PC-3 (cell line): ENCODE measurements at regions of chr7 and their contacts with region 1.

Region 1: DNA sequence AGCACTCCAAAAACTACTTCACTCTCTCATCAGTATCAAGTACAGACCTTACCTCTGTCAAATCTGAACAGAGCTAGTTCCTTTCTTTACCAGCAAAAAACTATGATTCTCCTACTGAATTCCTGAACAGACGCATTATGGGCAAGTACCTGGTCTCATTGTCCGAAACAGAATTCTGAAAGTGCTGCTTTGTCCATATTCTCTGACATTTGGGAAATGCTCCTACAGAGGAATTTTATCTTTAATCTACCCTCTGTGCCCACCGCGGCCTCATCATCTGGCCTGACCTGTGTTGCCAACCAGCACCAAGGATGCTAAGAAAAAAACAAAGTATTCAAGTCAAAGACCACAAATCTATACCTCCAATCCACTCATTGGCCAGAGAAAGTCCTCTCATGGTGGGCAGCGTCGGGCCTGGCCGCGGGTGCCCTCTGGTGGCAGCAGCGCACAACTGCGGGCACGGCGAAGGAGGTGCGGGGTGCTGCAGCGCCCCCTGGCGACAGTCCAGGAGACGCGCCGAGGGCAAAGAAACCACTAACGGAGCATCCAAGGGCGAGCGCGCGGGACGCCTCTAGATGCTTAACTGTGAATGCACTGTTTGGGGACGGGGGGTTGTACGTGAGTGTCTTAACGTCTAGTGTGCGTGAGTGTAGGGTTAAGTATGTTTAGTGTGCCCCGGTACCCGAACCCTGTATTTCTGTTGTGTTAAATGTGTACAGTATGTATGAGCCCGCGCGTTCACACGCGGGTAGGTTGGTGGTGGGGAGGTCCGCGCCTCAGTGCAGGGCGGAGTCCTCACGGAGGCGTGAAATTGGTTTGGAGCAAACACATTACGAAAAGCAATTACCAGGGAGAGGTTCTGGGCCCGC is 5.0 kb upstream of the GBX1 start:
- DNase-seq: peak; percentile 66
- ATAC-seq: peak; percentile 66
- H3K4me3 ChIP-seq: peak overlapping the region; percentile 28; the same call in 1 of the 2 replicates
- H3K27ac ChIP-seq: no peak overlapping the region
- H3K4me1 ChIP-seq: peaks cover 6% of the 10 kb centered on the region; the same call in 1 of the 2 replicates
- H3K27me3 ChIP-seq: peaks cover 23% of the 10 kb centered on the region
- CTCF ChIP-seq: peak; percentile 100

Region 2: DNA sequence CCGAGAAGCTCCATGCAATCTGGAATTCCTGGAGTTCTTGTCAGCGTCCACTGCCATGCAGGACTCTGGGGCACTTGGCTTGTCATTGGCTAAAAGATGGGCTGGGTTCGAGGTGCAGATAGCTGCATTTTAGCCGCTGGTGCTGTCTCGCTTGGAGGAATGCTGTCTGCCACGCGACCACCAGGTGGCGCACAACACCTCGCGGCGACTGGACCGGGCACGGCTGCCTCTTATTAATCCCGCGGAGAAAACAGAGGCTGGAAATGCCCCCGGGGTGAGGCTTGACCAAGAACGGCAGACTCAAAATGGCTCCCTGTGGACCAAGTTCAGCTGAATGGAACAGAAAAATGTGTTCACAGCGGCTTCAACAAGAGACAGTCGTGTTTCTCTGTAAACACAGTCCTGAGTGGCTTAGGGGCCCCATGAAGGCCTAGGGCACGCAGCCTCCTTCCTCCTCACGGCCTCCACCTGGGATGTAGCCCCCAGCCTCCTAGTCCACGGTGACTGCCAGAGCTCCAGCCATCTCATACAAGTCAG is 274.0 kb before region 1 on chr7:
- CTCF ChIA-PET with region 1: no interaction called
- POLR2A ChIA-PET with region 1: no interaction called
- intact Hi-C with region 1: loop called (anchors 5 kb)
- DNase-seq: peak; percentile 72
- ATAC-seq: peak; percentile 83
- H3K4me3 ChIP-seq: no peak overlapping the region
- H3K27ac ChIP-seq: no peak overlapping the region
- H3K4me1 ChIP-seq: peaks cover 16% of the 10 kb centered on the region
- H3K27me3 ChIP-seq: no peaks in the 10 kb centered on the region
- CTCF ChIP-seq: peak; percentile 91

Region 3: DNA sequence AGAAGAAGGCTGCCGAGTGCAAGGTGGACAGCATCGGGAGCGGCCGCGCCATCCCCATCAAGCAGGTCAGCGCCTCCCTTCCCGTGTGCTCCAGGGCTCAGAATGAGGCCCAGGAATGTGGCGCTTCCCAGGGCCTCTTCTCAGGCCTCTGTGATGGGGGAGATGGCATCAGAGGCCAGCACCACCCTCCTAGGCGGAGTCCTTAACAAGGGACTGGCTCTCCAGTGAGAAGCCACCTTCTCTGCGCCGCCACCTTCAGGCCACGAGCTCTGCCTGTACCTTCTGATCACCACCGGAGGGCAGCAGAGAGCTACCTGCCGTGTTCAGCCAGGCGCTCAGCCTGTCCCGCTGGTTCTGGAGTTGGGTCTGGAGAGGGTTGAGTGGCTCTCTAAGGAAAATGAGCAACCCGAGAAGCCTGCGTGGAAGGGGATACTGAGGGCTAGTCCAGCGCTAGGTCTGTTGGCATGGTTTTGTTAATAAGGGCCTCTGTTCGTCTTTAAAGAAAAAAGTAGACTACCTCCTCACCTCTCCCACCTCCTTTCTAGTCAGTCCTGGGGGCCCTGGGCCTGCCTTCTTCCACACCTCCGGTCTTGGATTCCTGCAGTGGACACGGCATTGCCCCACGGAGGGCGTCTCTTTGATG is 48.6 kb before region 1 on chr7:
- CTCF ChIA-PET with region 1: interaction called, 10 read pairs
- POLR2A ChIA-PET with region 1: no interaction called
- intact Hi-C with region 1: loop called (anchors 1 kb)
- DNase-seq: peak; percentile 86
- ATAC-seq: peak; percentile 94
- H3K4me3 ChIP-seq: no peak overlapping the region
- H3K27ac ChIP-seq: no peak overlapping the region
- H3K4me1 ChIP-seq: no peaks in the 10 kb centered on the region
- H3K27me3 ChIP-seq: no peaks in the 10 kb centered on the region
- CTCF ChIP-seq: peak; percentile 98

Region 4: GRCh38 chr7:151304856-151305255 is 132.3 kb after region 1 on chr7:
- CTCF ChIA-PET with region 1: no interaction called
- POLR2A ChIA-PET with region 1: no interaction called
- intact Hi-C with region 1: loop called (anchors 5 kb)
- DNase-seq: peak; percentile 2
- ATAC-seq: no peak
- H3K4me3 ChIP-seq: no peak overlapping the region
- H3K27ac ChIP-seq: no peak overlapping the region
- H3K4me1 ChIP-seq: peaks cover 3% of the 10 kb centered on the region; the same call in 1 of the 2 replicates
- H3K27me3 ChIP-seq: peaks cover 31% of the 10 kb centered on the region
- CTCF ChIP-seq: no peak